Dendritic cell treated with granulocyte-macrophage colony-stimulating factor and Interleukin-4, amounts not matched to agents 40 ng/mL and 50 ng/mL, for 4 days (primary cell): ENCODE measurements at regions of chr7 and their contacts with region 1.

Region 1: GRCh38 chr7:36366718-36367560 is 22.7 kb upstream of the ANLN start:
- H3K4me3 Mint-ChIP-seq: peak overlapping the region; percentile 86
- H3K27ac Mint-ChIP-seq: peak overlapping the region; percentile 43
- H3K4me1 Mint-ChIP-seq: no peaks in the 10 kb centered on the region
- H3K27me3 Mint-ChIP-seq: peaks cover 9% of the 10 kb centered on the region

Region 2: GRCh38 chr7:36389371-36390198 is 22.6 kb after region 1 on chr7 and contains the start of gene ANLN:
- intact Hi-C with region 1: loop called (anchors 2 kb)
- H3K4me3 Mint-ChIP-seq: peak within 1 kb of the TSS; percentile 87
- H3K27ac Mint-ChIP-seq: peak within 1 kb of the TSS; percentile 86
- H3K4me1 Mint-ChIP-seq: peaks cover 35% of the 10 kb centered on the region
- H3K27me3 Mint-ChIP-seq: no peaks in the 10 kb centered on the region